Activated T-helper 2 cell treated with anti-CD3 and anti-CD28 coated beads, Interferon-gamma antibody, Interleukin-2, Interleukin-4, amounts not matched to agents 10 μg/mL and 5 μg/mL and 100 μg/mL, durations not matched to agents 14 hours and 24 hours and 36 hours (primary cell): ENCODE measurements at regions of chr11 and their contacts with region 1.

Region 1: GRCh38 chr11:107565219-107565937 is at the start of gene ALKBH8:
- DNase-seq: peak; percentile 69
- H3K4me3 Mint-ChIP-seq: peak within 1 kb of the TSS; percentile 88
- H3K27ac Mint-ChIP-seq: peak within 1 kb of the TSS; percentile 92
- H3K4me1 Mint-ChIP-seq: peaks cover 49% of the 10 kb centered on the region
- H3K27me3 Mint-ChIP-seq: no peaks in the 10 kb centered on the region
- total RNA-seq, gene ALKBH8: 10.6 and 11.9 TPM in 2 replicates

Region 2: DNA sequence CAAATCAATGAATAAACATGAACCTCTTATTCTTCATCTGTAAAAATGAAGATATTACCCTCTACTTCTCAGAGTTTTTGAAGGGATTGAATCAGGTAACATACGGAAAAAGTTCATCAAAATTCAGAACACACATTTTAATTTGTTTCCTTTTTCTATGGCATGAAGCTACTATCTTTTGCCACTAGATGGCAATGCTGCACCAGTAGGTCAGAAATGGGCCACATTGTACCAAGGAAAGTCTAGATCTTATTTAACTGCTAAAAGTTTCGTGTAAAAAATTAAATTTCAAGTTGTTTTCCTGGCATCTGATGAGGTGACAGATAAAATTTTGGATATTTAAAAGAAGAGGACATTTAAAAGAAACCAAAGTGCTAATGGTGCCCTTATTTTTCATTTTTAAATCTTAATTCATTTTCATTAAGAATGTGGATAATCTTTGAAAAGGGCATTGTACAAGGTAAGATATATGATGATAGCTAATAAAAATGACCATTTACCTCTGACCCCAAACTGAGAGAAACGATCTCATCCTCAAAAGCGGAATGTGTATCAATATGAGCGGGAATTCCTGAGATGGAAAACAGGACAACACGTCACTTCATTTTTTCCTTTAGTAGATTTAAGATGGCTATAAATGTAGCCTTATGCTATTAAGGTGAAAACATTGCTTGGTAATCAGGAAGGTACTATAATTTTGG is 16.0 kb before region 1 on chr11:
- intact Hi-C with region 1: loop called (anchors 1 kb)
- DNase-seq: no peak
- H3K4me3 Mint-ChIP-seq: no peak overlapping the region
- H3K27ac Mint-ChIP-seq: no peak overlapping the region
- H3K4me1 Mint-ChIP-seq: peaks cover 4% of the 10 kb centered on the region
- H3K27me3 Mint-ChIP-seq: no peaks in the 10 kb centered on the region

Region 3: GRCh38 chr11:107689317-107690202 is 124.2 kb after region 1 on chr11:
- intact Hi-C with region 1: loop called (anchors 1 kb)
- DNase-seq: peak; percentile 17
- H3K4me3 Mint-ChIP-seq: no peak overlapping the region
- H3K27ac Mint-ChIP-seq: no peak overlapping the region
- H3K4me1 Mint-ChIP-seq: no peaks in the 10 kb centered on the region
- H3K27me3 Mint-ChIP-seq: peaks cover 11% of the 10 kb centered on the region

Region 4: DNA sequence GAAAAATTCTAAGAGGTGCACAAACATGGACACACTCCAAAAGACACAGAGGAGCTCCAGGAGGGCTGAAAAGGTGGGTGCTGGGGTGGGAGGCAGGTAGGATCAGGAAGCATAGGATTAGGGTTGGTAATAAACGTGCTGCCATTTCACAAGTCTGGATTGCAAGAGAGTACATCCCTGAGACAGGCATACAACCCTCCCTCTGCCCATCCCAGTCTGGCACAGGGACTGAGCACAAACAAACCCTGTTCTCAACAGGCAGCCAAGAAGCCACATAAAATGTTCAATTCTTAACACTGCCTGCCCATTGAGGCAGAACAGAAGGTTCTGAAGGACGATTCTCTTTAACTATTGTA is 274.7 kb after region 1 on chr11:
- intact Hi-C with region 1: loop called (anchors 5 kb)
- DNase-seq: no peak
- H3K4me3 Mint-ChIP-seq: no peak overlapping the region
- H3K27ac Mint-ChIP-seq: peak overlapping the region; percentile 96
- H3K4me1 Mint-ChIP-seq: peaks cover 57% of the 10 kb centered on the region
- H3K27me3 Mint-ChIP-seq: no peaks in the 10 kb centered on the region

Region 5: DNA sequence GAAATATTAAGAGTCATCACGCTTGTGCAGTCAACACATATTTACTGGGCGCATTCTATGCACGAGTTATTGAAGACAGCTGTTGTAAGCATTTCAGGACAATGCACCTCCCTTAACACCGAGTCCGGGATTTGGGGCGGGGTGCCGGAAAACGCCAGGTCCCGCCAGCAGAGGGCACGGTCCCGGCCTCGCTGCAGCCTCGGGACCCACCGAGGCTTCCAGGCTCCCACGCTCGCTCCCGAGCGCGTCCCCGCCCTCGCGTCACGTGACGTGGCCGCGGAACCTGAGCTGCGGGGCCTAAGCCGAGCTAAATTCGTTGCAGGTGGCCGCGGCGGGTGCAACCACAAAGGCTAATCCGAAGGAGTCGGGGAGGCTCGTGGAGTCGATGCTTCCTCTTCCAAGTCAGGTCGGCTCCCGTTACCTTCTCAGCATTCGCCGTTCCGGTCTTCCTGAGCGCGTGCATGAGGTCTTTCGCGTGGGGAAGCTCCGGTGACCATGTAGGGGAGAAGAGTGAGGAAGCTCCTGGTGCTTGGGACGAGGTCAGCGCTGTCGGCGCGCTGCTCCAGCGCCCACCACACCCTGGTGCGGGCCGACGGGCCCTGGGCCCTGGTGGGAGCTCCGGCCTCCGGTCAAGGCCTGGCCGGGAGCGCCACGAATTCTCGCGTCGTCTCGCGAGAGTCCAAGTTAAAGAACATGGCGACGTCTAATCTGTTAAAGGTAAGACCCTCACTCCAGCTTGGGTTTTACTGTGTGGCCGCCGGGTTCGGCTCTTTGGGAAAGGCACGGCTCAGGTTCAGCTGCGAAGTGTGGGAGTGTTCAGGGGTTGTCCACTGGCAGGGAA is 443.5 kb after region 1 on chr11 and contains the start of gene CUL5:
- intact Hi-C with region 1: loop called (anchors 5 kb)
- DNase-seq: peak; percentile 86
- H3K4me3 Mint-ChIP-seq: peak within 1 kb of the TSS; percentile 91
- H3K27ac Mint-ChIP-seq: peak within 1 kb of the TSS; percentile 94
- H3K4me1 Mint-ChIP-seq: peaks cover 16% of the 10 kb centered on the region
- H3K27me3 Mint-ChIP-seq: no peaks in the 10 kb centered on the region
- total RNA-seq, gene CUL5: 33.7 and 34.2 TPM in 2 replicates

Region 6: DNA sequence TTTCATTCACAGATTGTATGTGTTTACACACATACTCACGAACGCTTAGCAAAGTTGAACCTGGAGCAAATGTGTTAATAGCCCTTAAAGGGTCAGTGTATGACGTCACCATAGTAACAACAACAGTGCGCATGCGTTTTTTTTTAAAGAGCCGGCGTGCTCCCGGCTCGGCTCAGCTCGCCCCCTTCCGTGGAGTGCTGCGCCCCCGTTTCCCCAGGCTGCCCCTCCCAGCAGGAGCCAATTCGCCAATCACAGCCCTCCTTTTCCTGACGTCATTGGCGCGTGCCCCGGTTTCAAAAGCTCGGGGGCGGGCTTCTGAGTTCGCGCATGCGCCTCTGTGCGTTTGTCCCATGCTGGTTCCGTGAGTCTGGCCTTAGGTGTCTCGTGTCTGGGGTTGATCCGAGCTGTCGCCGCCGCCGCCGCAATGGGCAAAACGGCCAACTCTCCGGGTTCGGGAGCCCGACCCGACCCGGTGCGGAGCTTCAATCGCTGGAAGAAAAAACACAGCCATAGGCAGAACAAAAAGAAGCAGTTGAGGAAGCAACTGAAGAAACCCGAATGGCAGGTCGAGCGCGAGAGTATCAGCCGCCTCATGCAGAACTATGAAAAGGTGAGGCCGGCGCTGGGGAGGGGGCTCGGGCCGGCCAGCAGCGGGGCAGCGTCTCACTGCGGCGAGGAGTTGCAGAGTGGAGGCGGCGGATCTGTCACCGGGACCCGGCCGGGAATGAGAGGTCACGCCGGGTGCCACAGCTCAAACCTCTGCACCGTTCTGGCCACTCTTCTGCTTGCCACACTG is 1099.5 kb after region 1 on chr11 and contains the start of gene DDX10:
- intact Hi-C with region 1: loop called (anchors 10 kb)
- DNase-seq: peak; percentile 98
- H3K4me3 Mint-ChIP-seq: peak within 1 kb of the TSS; percentile 99
- H3K27ac Mint-ChIP-seq: peak within 1 kb of the TSS; percentile 97
- H3K4me1 Mint-ChIP-seq: peaks cover 28% of the 10 kb centered on the region
- H3K27me3 Mint-ChIP-seq: peaks cover 6% of the 10 kb centered on the region
- total RNA-seq, gene DDX10: 57.8 TPM in 2 replicates